ENCODE measurements at regions of chr3 and their contacts with region 1.

Region 1: GRCh38 chr3:127697551-127698240 is 24.9 kb downstream of the ABTB1 start:
- DNase-seq: no peak
- H3K4me3 ChIP-seq: peak overlapping the region in 1 of 2 donors; percentile 23
- H3K27ac ChIP-seq: peak overlapping the region; percentile 89
- H3K4me1 ChIP-seq: peaks cover 49% of the 10 kb centered on the region
- H3K27me3 ChIP-seq: no peaks in the 10 kb centered on the region
- CTCF ChIP-seq: no peak
- POLR2A ChIP-seq: no peak

Region 2: DNA sequence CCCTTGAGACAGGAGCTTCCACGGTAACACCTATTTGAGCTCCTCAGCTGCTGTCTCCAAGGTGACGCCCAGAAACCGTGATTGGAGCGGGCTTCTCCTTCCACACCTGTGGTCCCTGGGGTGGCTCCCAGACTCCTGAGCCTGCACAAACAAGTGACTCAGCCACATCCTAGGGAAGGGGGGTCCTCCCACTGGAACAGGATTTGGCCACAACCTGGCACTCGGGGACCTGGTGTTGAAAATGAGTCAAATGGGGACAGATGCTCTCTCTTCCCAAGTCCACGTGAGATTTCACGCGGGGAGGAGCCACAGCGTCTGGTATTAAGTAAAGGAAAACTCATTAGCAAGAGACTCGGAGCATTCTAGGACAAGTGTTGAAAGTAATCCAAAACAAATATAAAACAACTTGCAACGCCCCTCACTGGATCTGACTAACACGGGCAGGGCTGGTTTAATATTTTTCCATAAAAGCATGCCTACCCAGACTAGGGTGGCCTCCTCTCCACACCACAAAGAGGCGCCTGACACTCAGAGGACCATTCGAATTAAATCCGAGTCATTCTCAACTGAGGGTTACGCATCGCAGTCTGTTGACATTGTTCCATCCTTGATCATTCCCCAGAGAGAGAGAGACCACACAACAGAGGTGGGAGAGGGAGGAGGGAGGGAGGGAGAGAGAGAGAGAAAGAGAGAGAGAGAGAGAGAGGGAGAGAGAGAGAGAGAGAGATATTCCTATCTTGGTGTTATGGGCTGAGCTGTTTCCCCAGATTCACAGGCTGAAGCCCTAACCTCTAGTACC is 50.2 kb after region 1 on chr3:
- intact Hi-C with region 1: loop called (anchors 10 kb)
- DNase-seq: no peak
- H3K4me3 ChIP-seq: no peak overlapping the region
- H3K27ac ChIP-seq: peak overlapping the region; percentile 76
- H3K4me1 ChIP-seq: peaks cover 48% of the 10 kb centered on the region
- H3K27me3 ChIP-seq: no peaks in the 10 kb centered on the region
- CTCF ChIP-seq: no peak
- POLR2A ChIP-seq: no peak

Measured in vagina (tissue), 2 donors.